ENCODE measurements at regions of chr12 and their contacts with region 1.

Region 1: GRCh38 chr12:21607701-21608100 is 3.1 kb upstream of the GYS2 start:
- DNase-seq: peak in 4 of 5 donors; percentile 34 to 40 (median 36)
- H3K4me3 ChIP-seq: no peak overlapping the region
- H3K4me3 Mint-ChIP-seq: no peak overlapping the region
- H3K27ac ChIP-seq: no peak overlapping the region
- H3K27ac Mint-ChIP-seq: no peak overlapping the region
- H3K4me1 ChIP-seq: peaks cover 10% of the 10 kb centered on the region
- H3K4me1 Mint-ChIP-seq: peaks cover 0 to 7% (median 5%) of the 10 kb centered on the region in 4 donors
- H3K27me3 ChIP-seq: no peaks in the 10 kb centered on the region
- H3K27me3 Mint-ChIP-seq: no peaks in the 10 kb centered on the region

Region 2: GRCh38 chr12:20342111-20342510 is 1265.6 kb before region 1 on chr12:
- CTCF ChIA-PET with region 1: no interaction called
- POLR2A ChIA-PET with region 1: no interaction called
- intact Hi-C with region 1: no loop called
- DNase-seq: no peak
- H3K4me3 ChIP-seq: no peak overlapping the region
- H3K4me3 Mint-ChIP-seq: no peak overlapping the region
- H3K27ac ChIP-seq: no peak overlapping the region
- H3K27ac Mint-ChIP-seq: no peak overlapping the region
- H3K4me1 ChIP-seq: no peaks in the 10 kb centered on the region
- H3K4me1 Mint-ChIP-seq: no peaks in the 10 kb centered on the region
- H3K27me3 ChIP-seq: no peaks in the 10 kb centered on the region
- H3K27me3 Mint-ChIP-seq: peaks cover 1 to 3% of the 10 kb centered on the region in 2 donors

Region 3: GRCh38 chr12:22018860-22019259 is 411.2 kb after region 1 on chr12:
- CTCF ChIA-PET with region 1: interaction called, 6 read pairs
- POLR2A ChIA-PET with region 1: no interaction called
- intact Hi-C with region 1: loop called (anchors 1 kb)
- DNase-seq: peak in 4 of 5 donors; percentile 15 to 30 (median 23)
- H3K4me3 ChIP-seq: no peak overlapping the region
- H3K4me3 Mint-ChIP-seq: no peak overlapping the region
- H3K27ac ChIP-seq: no peak overlapping the region
- H3K27ac Mint-ChIP-seq: no peak overlapping the region
- H3K4me1 ChIP-seq: no peaks in the 10 kb centered on the region
- H3K4me1 Mint-ChIP-seq: no peaks in the 10 kb centered on the region
- H3K27me3 ChIP-seq: no peaks in the 10 kb centered on the region
- H3K27me3 Mint-ChIP-seq: peaks cover 3 to 10% of the 10 kb centered on the region in 2 donors

Measured in CD4-positive, alpha-beta memory T cell (primary cell).